Panc1 (cell line): ENCODE measurements at regions of chr19 and their contacts with region 1.

Region 1: GRCh38 chr19:36054119-36054732 is at the start of gene THAP8:
- DNase-seq: peak; percentile 99
- ATAC-seq: peak; percentile 91
- H3K4me3 ChIP-seq: peak within 1 kb of the TSS; percentile 79 to 99
- H3K27ac ChIP-seq: peak within 1 kb of the TSS; percentile 97
- H3K4me1 ChIP-seq: peaks cover 6% of the 10 kb centered on the region
- H3K27me3 ChIP-seq: no peaks in the 10 kb centered on the region
- CTCF ChIP-seq: peak; percentile 74
- total RNA-seq, gene THAP8: 9.6 TPM

Region 2: GRCh38 chr19:35879770-35880317 is 174.4 kb before region 1 on chr19:
- CTCF ChIA-PET with region 1: no interaction called
- POLR2A ChIA-PET with region 1: interaction called, 10 read pairs
- in situ Hi-C with region 1: no loop called
- intact Hi-C with region 1: no loop called
- DNase-seq: peak; percentile 50
- ATAC-seq: peak; percentile 93
- H3K4me3 ChIP-seq: no peak overlapping the region
- H3K27ac ChIP-seq: no peak overlapping the region
- H3K4me1 ChIP-seq: 0 out of 2 replicates have a peak, but pooled peaks cover 2% of the 10 kb centered on the region
- H3K27me3 ChIP-seq: no peaks in the 10 kb centered on the region
- CTCF ChIP-seq: no peak